Cardiac septum (tissue), 1 donor: ENCODE measurements at regions of chr5 and their contacts with region 1.

Region 1: DNA sequence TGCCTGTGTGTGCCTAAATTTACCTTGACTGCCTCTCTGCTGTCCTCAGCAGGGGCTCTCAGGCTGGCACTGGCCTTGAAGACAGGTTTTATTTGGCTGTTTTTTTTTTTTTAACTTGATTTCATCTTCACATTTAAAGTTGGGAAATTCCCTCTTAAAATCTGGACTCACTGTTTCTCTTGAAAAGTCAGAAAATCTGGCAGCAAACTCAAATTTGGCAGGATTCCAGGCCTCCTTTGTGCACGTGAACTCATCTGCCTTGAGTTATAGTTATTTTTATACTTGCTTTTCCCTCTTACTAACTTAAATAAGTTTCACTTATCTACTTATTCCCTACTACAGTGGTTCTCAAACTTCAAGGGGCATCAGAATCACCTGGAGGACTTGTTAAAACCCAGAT is 118.4 kb upstream of the MAP3K1 start:
- DNase-seq: no peak

Region 2: GRCh38 chr5:56534032-56534829 is 162.7 kb before region 1 on chr5:
- intact Hi-C with region 1: no loop called
- DNase-seq: no peak

Region 3: GRCh38 chr5:56814963-56815658 is 118.2 kb after region 1 on chr5 and contains the start of gene MAP3K1:
- intact Hi-C with region 1: loop called (anchors 5 kb)
- DNase-seq: peak; percentile 90
- total RNA-seq, gene MAP3K1: 6.8 TPM